Calu3 (cell line): ENCODE measurements at regions of chr16 and their contacts with region 1.

Region 1: GRCh38 chr16:31618130-31618529 is 90.4 kb downstream of the AHSP start:
- DNase-seq: no peak
- H3K4me3 Mint-ChIP-seq: no peak overlapping the region
- H3K27ac Mint-ChIP-seq: no peak overlapping the region
- H3K4me1 Mint-ChIP-seq: no peaks in the 10 kb centered on the region
- H3K27me3 Mint-ChIP-seq: no peaks in the 10 kb centered on the region
- CTCF ChIP-seq: no peak

Region 2: DNA sequence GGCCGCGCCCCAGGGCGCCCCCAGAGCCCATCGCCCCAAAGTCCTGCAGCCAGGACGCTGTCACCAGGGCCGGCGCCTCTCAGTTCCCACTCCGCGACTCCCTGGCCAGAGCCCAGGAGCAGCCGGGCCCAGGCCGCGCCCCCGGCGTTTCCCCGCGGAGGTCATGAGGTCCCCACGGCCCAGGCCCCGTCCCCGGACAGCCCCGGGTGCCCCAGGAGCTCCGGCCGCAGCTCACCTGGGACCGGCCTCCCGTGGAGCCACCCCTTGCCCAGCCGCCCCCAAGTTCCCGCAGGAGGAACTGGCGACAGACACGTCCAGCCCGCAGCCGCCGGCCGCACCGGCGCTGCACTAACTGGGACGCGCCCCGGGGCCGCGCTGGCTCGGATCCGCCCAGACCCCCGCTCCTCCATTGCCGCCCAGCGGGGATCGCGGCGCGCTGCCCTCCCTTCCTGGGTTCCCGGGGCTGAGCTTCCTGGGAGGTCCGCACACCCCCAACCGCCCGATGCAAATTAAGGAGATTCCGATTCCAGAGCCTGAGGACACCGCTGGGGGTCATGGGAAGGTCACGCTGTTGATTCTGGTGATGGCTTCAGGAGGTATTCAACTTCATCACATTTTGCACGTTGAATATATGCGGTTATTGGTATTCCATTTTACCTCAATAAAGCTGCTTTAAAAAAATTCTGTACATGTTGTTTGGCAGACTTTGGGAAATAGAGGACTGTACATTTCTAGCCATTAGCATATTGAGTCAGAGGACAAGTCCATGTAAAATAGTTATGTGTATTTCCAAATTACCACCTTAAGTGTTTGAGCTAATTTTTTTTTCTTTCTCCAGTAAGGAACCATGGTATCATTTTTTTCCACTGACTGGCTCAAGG is 80.5 kb before region 1 on chr16:
- CTCF ChIA-PET with region 1: no interaction called
- intact Hi-C with region 1: loop called (anchors 10 kb)
- DNase-seq: no peak
- H3K4me3 Mint-ChIP-seq: no peak overlapping the region
- H3K27ac Mint-ChIP-seq: no peak overlapping the region
- H3K4me1 Mint-ChIP-seq: no peaks in the 10 kb centered on the region
- H3K27me3 Mint-ChIP-seq: no peaks in the 10 kb centered on the region
- CTCF ChIP-seq: no peak